A549 (cell line): ENCODE measurements at regions of chr17 and their contacts with region 1.

Region 1: DNA sequence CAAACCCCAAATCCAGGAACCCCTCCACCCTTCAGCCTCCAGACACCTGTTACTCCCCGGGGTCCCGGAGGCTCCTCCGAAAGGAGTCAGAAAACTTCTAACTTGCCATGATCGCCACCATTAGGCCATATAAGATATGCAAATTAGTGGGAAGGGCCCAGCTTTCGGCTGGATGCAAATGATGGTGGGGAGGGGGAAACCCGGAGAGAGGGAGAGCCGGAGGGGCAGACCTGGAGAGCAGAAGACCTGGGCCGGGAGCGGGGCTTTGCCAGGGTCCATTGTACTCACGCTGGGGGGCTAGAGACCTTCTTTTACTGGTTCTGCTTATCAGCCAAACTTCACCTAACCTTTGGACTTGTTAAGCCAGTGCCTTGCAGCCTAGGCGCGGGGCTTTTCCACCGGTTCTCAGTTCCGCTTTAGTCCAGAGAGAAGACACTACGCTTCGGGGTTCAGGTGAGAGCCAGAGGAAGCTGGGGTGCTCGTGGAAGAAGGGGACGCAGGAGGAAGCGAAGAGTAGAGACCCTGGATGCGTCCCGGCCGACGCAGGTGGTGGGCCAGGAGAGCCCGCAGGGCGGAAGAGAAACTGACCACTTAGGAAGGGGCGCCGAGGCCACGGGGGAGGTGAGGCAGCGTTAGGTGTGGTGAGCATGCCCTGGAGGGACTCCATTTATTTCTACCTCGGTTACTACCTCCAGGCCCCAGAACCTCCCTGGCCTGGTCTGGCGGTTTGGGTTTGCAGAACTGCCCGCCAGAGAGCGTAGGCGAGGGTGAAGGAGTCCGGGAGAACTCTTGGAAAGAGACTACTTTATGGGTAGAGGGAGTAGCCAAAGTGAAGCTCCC is at the start of gene HNF1B:
- DNase-seq: peak; percentile 68 to 76
- ATAC-seq: peak; percentile 40 to 50
- H3K4me3 ChIP-seq: peak within 1 kb of the TSS; percentile 67
- H3K27ac ChIP-seq: peak within 1 kb of the TSS; percentile 81 to 94
- H3K4me1 ChIP-seq: peaks cover 23% of the 10 kb centered on the region
- CTCF ChIP-seq: peak; percentile 48
- EP300 ChIP-seq: no peak
- POLR2A ChIP-seq: peak; percentile 60
- RAD21 ChIP-seq: peak; percentile 55 to 59; a peak in 4 of 5 replicates
- polyA plus RNA-seq, gene HNF1B: 13.3 and 17.0 TPM in 2 replicates

Region 2: DNA sequence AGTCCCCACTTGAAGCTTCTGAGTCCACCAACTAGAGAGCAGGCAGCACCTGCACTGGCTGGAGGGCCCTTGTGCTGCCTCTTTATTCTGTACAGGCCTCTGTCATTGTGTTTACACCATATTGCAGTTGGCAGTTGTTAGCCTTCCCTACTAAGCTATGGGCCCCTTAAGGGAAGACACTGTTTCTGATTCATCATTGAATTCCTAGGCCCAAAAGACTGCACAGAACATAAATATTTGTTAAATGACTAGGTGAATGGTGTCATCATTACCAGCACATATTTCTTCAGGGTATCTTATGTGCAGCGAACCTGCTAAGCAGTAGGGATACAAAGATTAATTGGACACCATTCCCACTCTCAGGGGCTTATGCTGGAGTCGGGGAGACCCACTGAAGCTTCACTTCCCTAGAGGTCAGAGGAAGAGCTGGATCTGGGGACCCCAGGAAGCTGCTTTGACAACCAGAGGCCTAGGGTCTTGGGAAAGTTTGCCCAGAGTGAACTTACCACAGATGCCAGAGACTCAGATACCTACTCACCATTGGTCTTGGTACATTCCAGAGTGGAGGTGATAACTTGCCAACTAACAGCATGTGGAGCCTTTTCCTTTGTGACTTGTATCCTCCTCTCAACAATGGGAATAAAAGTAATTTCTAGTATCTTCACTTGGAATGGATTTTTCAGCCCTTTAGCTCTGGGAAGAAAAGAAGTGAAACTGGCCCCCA is 73.2 kb before region 1 on chr17:
- CTCF ChIA-PET with region 1: interaction called, 15 read pairs
- POLR2A ChIA-PET with region 1: no interaction called
- DNase-seq: peak; percentile 77 to 83
- ATAC-seq: peak; percentile 90 to 91
- H3K4me3 ChIP-seq: no peak overlapping the region
- H3K27ac ChIP-seq: peak overlapping the region; percentile 72 to 85
- H3K4me1 ChIP-seq: peaks cover 24% of the 10 kb centered on the region
- CTCF ChIP-seq: no peak
- EP300 ChIP-seq: 0 out of 5 replicates have a peak, but pooled peaks of 1 of the 2 experiments have one; percentile 40
- POLR2A ChIP-seq: no peak
- RAD21 ChIP-seq: no peak

Region 3: GRCh38 chr17:37717627-37718323 is 27.4 kb before region 1 on chr17:
- CTCF ChIA-PET with region 1: interaction called, 46 read pairs
- POLR2A ChIA-PET with region 1: interaction called, 22 read pairs
- DNase-seq: no peak
- ATAC-seq: no peak
- H3K4me3 ChIP-seq: peak overlapping the region; percentile 22
- H3K27ac ChIP-seq: peak overlapping the region; percentile 89 to 95
- H3K4me1 ChIP-seq: peaks cover 74% of the 10 kb centered on the region
- CTCF ChIP-seq: no peak
- EP300 ChIP-seq: no peak
- POLR2A ChIP-seq: no peak
- RAD21 ChIP-seq: no peak

Region 4: GRCh38 chr17:37791447-37792399 is 46.5 kb after region 1 on chr17:
- CTCF ChIA-PET with region 1: interaction called, 27 read pairs
- POLR2A ChIA-PET with region 1: interaction called, 6 read pairs
- DNase-seq: peak; percentile 35 to 80
- ATAC-seq: peak in 1 of 2 experiments; percentile 67; a peak in 3 of 6 replicates
- H3K4me3 ChIP-seq: no peak overlapping the region
- H3K27ac ChIP-seq: peak overlapping the region in 1 of 2 experiments; percentile 21; a peak in 2 of 6 replicates
- H3K4me1 ChIP-seq: peaks cover 29% of the 10 kb centered on the region
- CTCF ChIP-seq: peak; percentile 83
- EP300 ChIP-seq: no peak
- POLR2A ChIP-seq: no peak
- RAD21 ChIP-seq: peak; percentile 72 to 79

Region 5: DNA sequence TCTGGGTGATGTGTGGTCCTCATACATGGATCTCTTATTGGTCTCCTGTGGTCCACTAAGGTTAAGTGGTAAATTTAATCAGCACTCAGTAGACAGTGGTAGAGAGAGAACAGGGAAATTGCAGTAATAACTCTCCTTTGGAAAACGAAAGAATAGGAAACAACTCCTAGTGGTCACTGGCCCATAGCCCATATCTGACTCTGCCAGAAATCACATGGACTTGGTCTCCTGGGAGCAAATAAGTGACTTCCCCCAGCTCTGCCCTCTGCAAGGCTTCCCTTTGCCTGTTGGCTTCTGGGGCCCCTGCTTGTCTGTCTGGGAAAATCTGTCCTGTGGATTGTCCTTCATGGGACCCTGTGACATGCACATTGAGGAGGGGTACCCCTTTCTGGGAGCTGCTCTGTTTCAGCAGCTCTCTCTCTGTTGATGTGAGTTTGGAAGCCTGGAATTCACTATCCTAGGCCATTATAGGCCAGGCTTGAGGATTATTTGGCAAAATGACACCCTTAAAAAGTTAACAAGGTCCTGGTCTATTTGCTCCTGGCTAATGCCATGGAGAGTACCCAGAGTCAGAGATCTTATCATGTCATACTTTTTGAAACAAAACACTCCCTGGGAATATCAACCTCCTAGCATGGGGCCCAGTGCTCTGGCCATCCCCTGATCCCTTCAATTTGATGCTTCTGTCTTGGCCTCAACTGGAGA is 57.7 kb after region 1 on chr17:
- CTCF ChIA-PET with region 1: no interaction called
- POLR2A ChIA-PET with region 1: no interaction called
- DNase-seq: no peak
- ATAC-seq: peak in 1 of 2 experiments; percentile 22; a peak in 2 of 6 replicates
- H3K4me3 ChIP-seq: no peak overlapping the region
- H3K27ac ChIP-seq: no peak overlapping the region
- H3K4me1 ChIP-seq: no peaks in the 10 kb centered on the region
- CTCF ChIP-seq: no peak
- EP300 ChIP-seq: no peak
- POLR2A ChIP-seq: no peak
- RAD21 ChIP-seq: no peak